A673 (cell line): ENCODE measurements at regions of chr16 and their contacts with region 1.

Region 1: DNA sequence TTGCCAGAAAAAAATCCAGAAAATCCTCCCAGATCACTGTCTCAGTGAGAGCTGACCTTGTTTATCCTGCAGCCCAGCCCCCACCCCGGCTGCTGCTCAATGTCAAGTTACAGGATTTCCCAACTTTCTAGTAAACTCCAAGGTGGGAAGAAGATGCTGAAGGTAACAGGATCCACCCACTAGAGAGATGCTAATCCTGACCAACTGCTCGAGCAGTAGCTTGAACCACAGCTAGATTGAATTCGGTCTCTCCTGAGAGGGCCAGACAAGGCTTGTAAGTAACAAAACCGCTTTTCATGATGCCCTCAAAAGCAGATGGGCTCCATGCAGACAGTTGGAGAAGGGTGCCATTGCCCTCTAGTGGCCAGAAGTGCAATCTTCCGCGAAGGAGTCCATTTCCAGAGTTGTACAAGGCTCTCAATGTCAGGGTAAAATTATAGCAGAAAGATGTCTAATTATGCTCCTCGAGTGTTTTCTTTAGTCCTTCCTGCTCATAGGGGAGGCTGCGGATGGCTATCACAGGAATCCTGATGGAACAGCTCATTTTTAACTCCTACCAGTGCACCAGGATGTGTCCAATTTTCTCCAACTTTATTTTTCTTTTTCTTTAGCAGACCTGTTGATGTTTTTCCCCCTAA is 3.9 kb downstream of the CDH11 start:
- DNase-seq: peak; percentile 91
- H3K4me3 ChIP-seq: peak overlapping the region; percentile 79
- H3K27ac ChIP-seq: no peak overlapping the region
- H3K4me1 ChIP-seq: peaks cover 33% of the 10 kb centered on the region
- H3K27me3 ChIP-seq: no peaks in the 10 kb centered on the region
- CTCF ChIP-seq: peak; percentile 95

Region 2: GRCh38 chr16:63461248-63461841 is 1656.6 kb before region 1 on chr16:
- CTCF ChIA-PET with region 1: no interaction called
- POLR2A ChIA-PET with region 1: no interaction called
- intact Hi-C with region 1: loop called (anchors 5 kb)
- DNase-seq: peak; percentile 57
- H3K4me3 ChIP-seq: no peak overlapping the region
- H3K27ac ChIP-seq: no peak overlapping the region
- H3K4me1 ChIP-seq: no peaks in the 10 kb centered on the region
- H3K27me3 ChIP-seq: no peaks in the 10 kb centered on the region
- CTCF ChIP-seq: peak; percentile 61

Region 3: GRCh38 chr16:64481497-64481896 is 636.4 kb before region 1 on chr16:
- CTCF ChIA-PET with region 1: no interaction called
- POLR2A ChIA-PET with region 1: no interaction called
- intact Hi-C with region 1: loop called (anchors 10 kb)
- DNase-seq: peak; percentile 81
- H3K4me3 ChIP-seq: no peak overlapping the region
- H3K27ac ChIP-seq: no peak overlapping the region
- H3K4me1 ChIP-seq: peaks cover 7% of the 10 kb centered on the region
- H3K27me3 ChIP-seq: no peaks in the 10 kb centered on the region
- CTCF ChIP-seq: no peak

Region 4: DNA sequence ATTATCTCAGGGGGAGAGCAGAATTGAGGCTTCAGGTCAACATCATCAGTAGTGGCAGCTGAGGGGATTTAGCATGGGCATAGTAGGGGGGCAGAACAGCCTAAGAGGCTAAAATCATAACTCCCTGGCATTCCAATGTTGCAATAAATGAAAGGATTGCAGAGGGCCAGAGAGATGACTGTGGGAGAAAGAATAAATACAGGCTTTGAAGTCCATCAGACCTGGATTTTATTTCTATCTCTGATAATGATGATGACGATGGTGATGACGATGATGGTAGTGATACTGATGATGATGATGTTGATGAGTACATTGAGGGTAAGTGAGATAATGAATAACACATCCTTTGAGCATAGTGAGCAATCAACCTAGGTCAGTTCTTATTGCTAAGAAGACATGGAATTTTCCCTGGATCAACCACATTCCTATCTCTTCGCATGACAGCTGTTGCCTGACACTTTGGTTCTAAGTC is 111.3 kb after region 1 on chr16:
- CTCF ChIA-PET with region 1: no interaction called
- POLR2A ChIA-PET with region 1: interaction called, 16 read pairs
- intact Hi-C with region 1: no loop called
- DNase-seq: no peak
- H3K4me3 ChIP-seq: no peak overlapping the region
- H3K27ac ChIP-seq: no peak overlapping the region
- H3K4me1 ChIP-seq: no peaks in the 10 kb centered on the region
- H3K27me3 ChIP-seq: no peaks in the 10 kb centered on the region
- CTCF ChIP-seq: no peak

Region 5: GRCh38 chr16:65406088-65406487 is 288.2 kb after region 1 on chr16:
- CTCF ChIA-PET with region 1: no interaction called
- POLR2A ChIA-PET with region 1: no interaction called
- intact Hi-C with region 1: no loop called
- DNase-seq: no peak
- H3K4me3 ChIP-seq: no peak overlapping the region
- H3K27ac ChIP-seq: no peak overlapping the region
- H3K4me1 ChIP-seq: no peaks in the 10 kb centered on the region
- H3K27me3 ChIP-seq: no peaks in the 10 kb centered on the region
- CTCF ChIP-seq: no peak

Region 6: GRCh38 chr16:65667011-65667578 is 549.2 kb after region 1 on chr16:
- CTCF ChIA-PET with region 1: no interaction called
- POLR2A ChIA-PET with region 1: no interaction called
- intact Hi-C with region 1: loop called (anchors 10 kb)
- DNase-seq: peak; percentile 65
- H3K4me3 ChIP-seq: no peak overlapping the region
- H3K27ac ChIP-seq: peak overlapping the region; percentile 43
- H3K4me1 ChIP-seq: peaks cover 42% of the 10 kb centered on the region
- H3K27me3 ChIP-seq: no peaks in the 10 kb centered on the region
- CTCF ChIP-seq: peak; percentile 50